ENCODE measurements at regions of chr19 and their contacts with region 1.

Region 1: GRCh38 chr19:38769635-38770211 is 3.6 kb downstream of the LGALS7 start:
- DNase-seq: peak; percentile 92
- ATAC-seq: peak; percentile 72
- H3K4me3 Mint-ChIP-seq: peak overlapping the region; percentile 44
- H3K27ac Mint-ChIP-seq: no peak overlapping the region
- H3K4me1 Mint-ChIP-seq: peaks cover 4% of the 10 kb centered on the region
- H3K27me3 Mint-ChIP-seq: peaks cover 9% of the 10 kb centered on the region
- CTCF ChIP-seq: peak; percentile 86

Region 2: GRCh38 chr19:38736413-38737280 is 33.1 kb before region 1 on chr19:
- CTCF ChIA-PET with region 1: interaction called, 14 read pairs
- POLR2A ChIA-PET with region 1: interaction called, 5 read pairs
- DNase-seq: peak; percentile 93
- ATAC-seq: peak; percentile 46
- H3K4me3 Mint-ChIP-seq: peak overlapping the region; percentile 68
- H3K27ac Mint-ChIP-seq: no peak overlapping the region
- H3K4me1 Mint-ChIP-seq: peaks cover 10% of the 10 kb centered on the region
- H3K27me3 Mint-ChIP-seq: peaks cover 23% of the 10 kb centered on the region
- CTCF ChIP-seq: no peak

Region 3: DNA sequence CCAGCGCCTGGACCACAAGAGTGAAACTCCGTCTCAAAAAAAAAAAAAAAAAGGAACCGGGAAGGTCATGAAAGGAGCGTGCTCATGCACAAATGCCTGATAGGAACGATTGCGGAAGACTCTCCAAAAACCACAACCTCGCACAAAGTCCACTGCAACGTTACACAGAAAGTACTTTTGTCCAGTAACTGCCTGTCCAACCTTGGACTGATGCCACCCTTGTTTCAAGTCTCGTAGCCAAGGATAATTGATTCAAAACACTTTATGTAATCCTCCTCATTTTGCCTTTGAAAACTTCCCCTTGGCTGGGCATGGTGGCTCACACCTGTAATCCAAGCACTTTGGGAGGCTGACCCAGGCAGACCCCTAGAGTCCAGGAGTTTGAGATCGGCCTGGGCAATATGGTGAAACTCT is 10.1 kb before region 1 on chr19:
- CTCF ChIA-PET with region 1: interaction called, 10 read pairs
- POLR2A ChIA-PET with region 1: no interaction called
- DNase-seq: no peak
- ATAC-seq: no peak
- H3K4me3 Mint-ChIP-seq: no peak overlapping the region
- H3K27ac Mint-ChIP-seq: no peak overlapping the region
- H3K4me1 Mint-ChIP-seq: no peaks in the 10 kb centered on the region
- H3K27me3 Mint-ChIP-seq: peaks cover 3% of the 10 kb centered on the region; the same call in 1 of the 2 replicates
- CTCF ChIP-seq: no peak

Region 4: GRCh38 chr19:38792250-38793111 is 22.8 kb after region 1 on chr19:
- CTCF ChIA-PET with region 1: interaction called, 26 read pairs
- POLR2A ChIA-PET with region 1: no interaction called
- DNase-seq: peak; percentile 82
- ATAC-seq: peak; percentile 57
- H3K4me3 Mint-ChIP-seq: peak overlapping the region; percentile 54
- H3K27ac Mint-ChIP-seq: no peak overlapping the region
- H3K4me1 Mint-ChIP-seq: peaks cover 8% of the 10 kb centered on the region
- H3K27me3 Mint-ChIP-seq: peaks cover 23% of the 10 kb centered on the region
- CTCF ChIP-seq: no peak; the same call in 1 of the 2 replicates

Region 5: GRCh38 chr19:38869856-38870607 is 100.3 kb after region 1 on chr19:
- CTCF ChIA-PET with region 1: interaction called, 12 read pairs
- POLR2A ChIA-PET with region 1: no interaction called
- DNase-seq: peak; percentile 89
- ATAC-seq: peak; percentile 78
- H3K4me3 Mint-ChIP-seq: peak overlapping the region; percentile 79
- H3K27ac Mint-ChIP-seq: no peak overlapping the region
- H3K4me1 Mint-ChIP-seq: peaks cover 7% of the 10 kb centered on the region
- H3K27me3 Mint-ChIP-seq: peaks cover 21% of the 10 kb centered on the region
- CTCF ChIP-seq: peak; percentile 50

Region 6: GRCh38 chr19:38924388-38924787 is 154.7 kb after region 1 on chr19:
- CTCF ChIA-PET with region 1: no interaction called
- POLR2A ChIA-PET with region 1: no interaction called
- DNase-seq: no peak
- ATAC-seq: no peak
- H3K4me3 Mint-ChIP-seq: no peak overlapping the region
- H3K27ac Mint-ChIP-seq: no peak overlapping the region
- H3K4me1 Mint-ChIP-seq: no peaks in the 10 kb centered on the region
- H3K27me3 Mint-ChIP-seq: no peaks in the 10 kb centered on the region
- CTCF ChIP-seq: no peak